ENCODE measurements at regions of chr15 and their contacts with region 1.

Region 1: DNA sequence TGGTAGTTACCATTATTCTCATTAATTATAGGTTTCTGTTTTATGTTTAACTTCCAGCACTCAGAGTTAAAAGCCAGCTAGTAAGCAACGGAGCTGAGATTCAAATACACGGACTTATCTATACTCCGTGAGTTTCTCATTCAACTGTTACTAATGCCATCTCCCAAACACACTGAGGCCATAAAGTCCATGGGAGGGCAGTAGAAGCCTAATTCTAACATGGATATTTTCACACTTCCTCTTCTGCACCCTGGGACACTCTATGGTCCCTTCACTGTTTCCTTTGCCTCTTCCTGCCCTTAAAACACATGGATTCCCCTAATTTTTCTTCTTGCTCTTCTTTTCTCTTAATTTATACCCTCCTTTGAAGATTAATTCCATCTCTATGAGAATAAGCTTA is 245.0 kb downstream of the KLF13 start:
- DNase-seq: no peak
- H3K4me3 ChIP-seq: no peak overlapping the region
- H3K27ac ChIP-seq: no peak overlapping the region
- H3K4me1 ChIP-seq: no peaks in the 10 kb centered on the region
- H3K27me3 ChIP-seq: no peaks in the 10 kb centered on the region
- CTCF ChIP-seq: no peak

Region 2: DNA sequence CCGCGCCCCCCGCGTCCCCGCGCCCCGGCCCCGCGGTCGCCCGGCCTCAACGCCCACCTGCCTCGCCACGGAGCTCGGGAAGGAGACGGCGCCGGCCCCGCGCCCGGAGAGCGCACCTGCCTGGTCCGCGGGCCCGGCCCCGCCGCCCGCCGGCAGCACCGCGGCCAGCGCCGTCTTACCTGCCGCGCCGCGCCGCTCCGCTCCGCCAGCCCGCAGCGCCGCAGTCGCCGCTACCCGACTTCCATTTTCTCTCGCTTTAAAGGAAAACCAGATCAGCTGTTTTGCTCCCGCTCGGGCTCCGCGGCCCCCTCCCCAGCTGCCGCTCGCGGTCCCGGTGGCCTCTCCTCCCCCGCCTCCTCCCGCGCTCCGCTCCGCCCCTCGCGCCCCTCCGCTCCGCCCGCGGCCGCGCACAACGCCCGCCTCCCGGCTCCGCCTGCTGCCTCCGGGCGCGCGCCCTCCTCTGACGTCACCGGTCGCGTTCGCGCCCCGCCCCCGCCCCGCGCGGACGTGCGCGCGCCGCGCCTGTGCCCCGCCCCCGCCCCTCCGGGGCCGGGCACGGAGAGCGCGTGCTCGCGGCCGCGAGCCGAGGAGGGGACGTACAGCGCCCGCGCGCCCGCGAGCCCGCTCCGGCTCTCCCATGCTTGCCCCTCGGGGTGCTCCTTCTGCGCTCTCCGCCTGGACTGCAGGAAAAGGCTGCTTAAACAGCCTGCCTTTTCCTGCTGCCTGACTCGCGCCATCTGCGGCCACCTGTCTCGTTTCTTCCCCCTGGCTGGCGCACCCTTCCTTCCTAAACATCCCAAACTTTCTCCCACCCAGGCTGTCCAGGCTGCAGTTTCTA is 298.9 kb after region 1 on chr15:
- CTCF ChIA-PET with region 1: no interaction called
- POLR2A ChIA-PET with region 1: no interaction called
- intact Hi-C with region 1: loop called (anchors 10 kb)
- DNase-seq: peak; percentile 88
- H3K4me3 ChIP-seq: peak within 1 kb of the TSS; percentile 54
- H3K27ac ChIP-seq: no peak within 1 kb of the TSS
- H3K4me1 ChIP-seq: no peaks in the 10 kb centered on the region
- H3K27me3 ChIP-seq: peaks cover 3% of the 10 kb centered on the region
- CTCF ChIP-seq: no peak

Measured in A673 (cell line).